ENCODE measurements at regions of chr2 and their contacts with region 1.

Region 1: GRCh38 chr2:110807522-110807921 is 75.1 kb downstream of the ACOXL start:
- DNase-seq: no peak
- ATAC-seq: no peak
- H3K4me3 ChIP-seq: no peak overlapping the region
- H3K4me3 Mint-ChIP-seq: no peak overlapping the region
- H3K27ac ChIP-seq: no peak overlapping the region
- H3K27ac Mint-ChIP-seq: no peak overlapping the region
- H3K4me1 ChIP-seq: peaks cover 4% of the 10 kb centered on the region
- H3K4me1 Mint-ChIP-seq: peaks cover 16% of the 10 kb centered on the region
- H3K27me3 ChIP-seq: peaks cover 0 to under 1% of the 10 kb centered on the region in 2 experiments
- H3K27me3 Mint-ChIP-seq: peaks cover 16% of the 10 kb centered on the region
- CTCF ChIP-seq: no peak

Region 2: DNA sequence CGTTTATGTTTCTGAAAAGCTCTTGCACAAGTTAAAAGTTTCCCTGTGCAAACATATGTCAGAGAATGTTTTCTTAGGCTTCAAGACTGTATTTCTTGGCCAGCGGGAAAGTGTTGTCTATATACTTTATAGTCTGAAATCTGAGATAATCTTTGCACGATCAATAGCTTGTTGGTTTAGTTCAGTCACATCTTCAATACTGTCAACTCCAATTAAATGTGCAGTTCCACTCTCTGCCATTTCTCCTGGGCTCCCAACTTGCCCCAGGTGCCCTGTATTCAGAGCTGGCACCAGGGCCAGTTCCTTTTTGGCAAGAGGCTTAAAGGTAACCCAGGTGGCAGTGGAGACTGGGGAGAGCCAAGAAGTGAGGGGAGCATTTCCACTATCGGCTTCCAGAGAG is 10.7 kb before region 1 on chr2:
- CTCF ChIA-PET with region 1: interaction called, 10 read pairs
- POLR2A ChIA-PET with region 1: no interaction called
- intact Hi-C with region 1: no loop called
- DNase-seq: no peak
- ATAC-seq: no peak
- H3K4me3 ChIP-seq: no peak overlapping the region
- H3K4me3 Mint-ChIP-seq: no peak overlapping the region
- H3K27ac ChIP-seq: no peak overlapping the region
- H3K27ac Mint-ChIP-seq: no peak overlapping the region
- H3K4me1 ChIP-seq: no peaks in the 10 kb centered on the region
- H3K4me1 Mint-ChIP-seq: no peaks in the 10 kb centered on the region
- H3K27me3 ChIP-seq: no peaks in the 10 kb centered on the region
- H3K27me3 Mint-ChIP-seq: peaks cover 24% of the 10 kb centered on the region
- CTCF ChIP-seq: no peak

Region 3: GRCh38 chr2:110897966-110898365 is 90.4 kb after region 1 on chr2:
- CTCF ChIA-PET with region 1: interaction called, 11 read pairs
- POLR2A ChIA-PET with region 1: no interaction called
- intact Hi-C with region 1: no loop called
- DNase-seq: no peak
- ATAC-seq: no peak
- H3K4me3 ChIP-seq: no peak overlapping the region
- H3K4me3 Mint-ChIP-seq: no peak overlapping the region
- H3K27ac ChIP-seq: no peak overlapping the region
- H3K27ac Mint-ChIP-seq: no peak overlapping the region
- H3K4me1 ChIP-seq: no peaks in the 10 kb centered on the region
- H3K4me1 Mint-ChIP-seq: no peaks in the 10 kb centered on the region
- H3K27me3 ChIP-seq: no peaks in the 10 kb centered on the region
- H3K27me3 Mint-ChIP-seq: no peaks in the 10 kb centered on the region
- CTCF ChIP-seq: no peak